HepG2 (cell line): ENCODE measurements at regions of chr7 and their contacts with region 1.

Region 1: GRCh38 chr7:151028131-151028947 is at the start of gene ABCB8:
- DNase-seq: peak; percentile 97
- ATAC-seq: peak; percentile 95
- H3K4me3 ChIP-seq: peak within 1 kb of the TSS; percentile 77 to 88 (median 82)
- H3K27ac ChIP-seq: peak within 1 kb of the TSS; percentile 62
- H3K4me1 ChIP-seq: peaks cover 27% of the 10 kb centered on the region
- H3K27me3 ChIP-seq: peaks cover 8 to 29% of the 10 kb centered on the region in 2 experiments; a peak in 4 of 5 replicates
- CTCF ChIP-seq: peak; percentile 85
- EP300 ChIP-seq: no peak
- POLR2A ChIP-seq: peak; percentile 42 to 57; a peak in 2 of 4 replicates
- RAD21 ChIP-seq: peak; percentile 72
- total RNA-seq, gene ABCB8: 7.2 and 16.7 TPM in 2 replicates

Region 2: GRCh38 chr7:149615690-149616270 is 1412.6 kb before region 1 on chr7:
- CTCF ChIA-PET with region 1: no interaction called
- POLR2A ChIA-PET with region 1: no interaction called
- in situ Hi-C with region 1: no loop called
- intact Hi-C with region 1: loop called (anchors 10 kb)
- DNase-seq: no peak
- ATAC-seq: peak; percentile 93
- H3K4me3 ChIP-seq: no peak overlapping the region
- H3K27ac ChIP-seq: no peak overlapping the region
- H3K4me1 ChIP-seq: no peaks in the 10 kb centered on the region
- H3K27me3 ChIP-seq: no peaks in the 10 kb centered on the region
- CTCF ChIP-seq: peak; percentile 36
- EP300 ChIP-seq: no peak
- POLR2A ChIP-seq: no peak
- RAD21 ChIP-seq: no peak

Region 3: DNA sequence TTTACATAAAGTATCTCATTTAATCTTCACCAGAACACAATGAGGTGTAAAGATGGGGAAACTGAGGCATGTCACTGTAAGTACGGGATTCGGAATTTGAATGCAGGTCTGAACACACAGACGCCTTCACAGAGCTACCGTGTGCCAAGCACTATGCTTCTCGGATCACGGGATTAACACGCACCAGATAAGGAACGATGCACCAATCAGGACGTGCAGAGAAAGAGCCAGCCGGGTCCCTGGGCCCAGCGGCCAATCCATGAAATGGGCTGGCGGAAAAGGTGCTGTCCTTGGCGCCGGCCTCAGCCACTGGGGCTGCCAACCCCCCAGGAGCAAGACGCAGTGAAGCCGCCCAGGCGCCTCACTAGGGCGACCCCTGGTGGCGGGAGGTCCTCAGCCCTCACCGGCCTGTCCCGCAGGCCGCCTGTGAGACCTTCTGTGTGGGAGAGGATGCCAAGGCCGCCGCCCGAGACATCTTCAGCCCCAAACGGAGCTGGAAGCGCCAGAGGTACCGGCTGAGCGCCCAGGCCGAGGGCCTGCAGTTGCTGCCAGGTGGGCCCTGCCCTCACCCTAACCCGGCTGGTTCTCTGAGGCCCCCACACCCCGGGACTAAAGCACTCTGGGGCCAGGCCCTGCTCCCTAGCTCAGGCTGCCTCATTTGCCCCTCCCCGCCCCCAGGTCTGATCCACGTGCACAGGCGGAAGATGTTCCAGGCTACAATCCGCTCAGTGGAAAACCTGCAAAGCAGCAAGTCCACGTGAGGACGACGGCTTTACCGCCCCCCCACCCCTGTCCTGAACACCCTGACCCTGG is 19.6 kb before region 1 on chr7:
- CTCF ChIA-PET with region 1: no interaction called
- POLR2A ChIA-PET with region 1: interaction called, 31 read pairs
- in situ Hi-C with region 1: no loop called
- intact Hi-C with region 1: no loop called
- DNase-seq: peak; percentile 47
- ATAC-seq: peak; percentile 62
- H3K4me3 ChIP-seq: peak overlapping the region; percentile 5 to 77 (median 62); a peak in 4 of 6 replicates
- H3K27ac ChIP-seq: no peak overlapping the region
- H3K4me1 ChIP-seq: peaks cover 96% of the 10 kb centered on the region
- H3K27me3 ChIP-seq: peaks cover 0 to 2% of the 10 kb centered on the region in 2 experiments; a peak in 1 of 5 replicates
- CTCF ChIP-seq: peak; percentile 95
- EP300 ChIP-seq: no peak
- POLR2A ChIP-seq: no peak
- RAD21 ChIP-seq: peak; percentile 46

Region 4: GRCh38 chr7:151080522-151081169 is 52.3 kb after region 1 on chr7 and contains the start of gene FASTK:
- CTCF ChIA-PET with region 1: interaction called, 3 read pairs
- POLR2A ChIA-PET with region 1: interaction called, 11 read pairs
- in situ Hi-C with region 1: no loop called
- intact Hi-C with region 1: no loop called
- DNase-seq: peak; percentile 77
- ATAC-seq: peak; percentile 72
- H3K4me3 ChIP-seq: peak within 1 kb of the TSS; percentile 85 to 96 (median 88)
- H3K27ac ChIP-seq: peak within 1 kb of the TSS; percentile 85
- H3K4me1 ChIP-seq: peaks cover 45% of the 10 kb centered on the region
- H3K27me3 ChIP-seq: no peaks in the 10 kb centered on the region; a peak in 1 of 5 replicates
- CTCF ChIP-seq: no peak
- EP300 ChIP-seq: peak in 1 of 2 experiments; percentile 20; a peak in 1 of 4 replicates
- POLR2A ChIP-seq: peak in 1 of 2 experiments; percentile 77; a peak in 2 of 4 replicates
- RAD21 ChIP-seq: peak; percentile 42; the same call in 1 of the 2 replicates
- total RNA-seq, gene FASTK: 33.0 and 52.9 TPM in 2 replicates

Region 5: DNA sequence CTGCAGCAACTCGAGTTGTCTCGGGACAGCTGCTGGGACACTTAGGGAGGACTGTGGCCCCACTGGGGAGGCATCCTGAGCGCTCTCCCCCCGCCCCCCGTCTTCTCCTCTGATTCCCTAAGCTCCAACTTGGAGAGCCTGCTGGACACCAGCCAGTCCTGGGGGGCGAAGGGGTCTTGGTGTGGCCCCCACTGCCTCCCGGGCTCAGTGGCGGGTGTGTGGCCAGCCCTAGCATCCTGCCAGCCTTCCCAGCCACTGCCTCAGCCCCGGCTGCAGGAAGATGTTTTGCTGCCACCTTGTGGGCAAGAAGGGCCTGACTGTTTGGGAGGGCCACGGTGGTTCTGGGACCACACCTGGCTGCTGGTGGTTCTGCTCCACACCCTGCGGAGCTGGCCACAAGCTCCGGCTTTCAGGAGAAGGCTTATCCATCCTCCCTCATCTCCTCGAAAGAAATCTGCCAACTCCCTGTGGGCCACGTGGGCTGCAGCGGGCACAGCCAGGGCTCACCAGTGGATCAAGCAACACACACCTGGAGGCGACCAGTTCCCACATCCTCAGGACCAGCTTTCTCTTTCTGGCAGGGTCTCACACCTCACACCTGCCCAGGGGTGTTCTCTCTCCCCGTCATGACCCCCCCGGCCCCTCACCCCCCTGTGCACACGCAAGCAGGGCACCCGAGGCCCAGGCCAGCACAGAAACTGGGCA is 82.8 kb after region 1 on chr7:
- CTCF ChIA-PET with region 1: interaction called, 3 read pairs
- POLR2A ChIA-PET with region 1: no interaction called
- in situ Hi-C with region 1: no loop called
- intact Hi-C with region 1: loop called (anchors 1 kb)
- DNase-seq: peak; percentile 49
- ATAC-seq: peak; percentile 92
- H3K4me3 ChIP-seq: no peak overlapping the region
- H3K27ac ChIP-seq: no peak overlapping the region
- H3K4me1 ChIP-seq: peaks cover 14% of the 10 kb centered on the region
- H3K27me3 ChIP-seq: no peaks in the 10 kb centered on the region
- CTCF ChIP-seq: peak; percentile 97
- EP300 ChIP-seq: no peak
- POLR2A ChIP-seq: no peak
- RAD21 ChIP-seq: peak; percentile 90